ENCODE measurements at regions of chr5 and their contacts with region 1.

Region 1: GRCh38 chr5:127030259-127031146 is at the start of gene MARCHF3:
- DNase-seq: peak; percentile 94
- H3K4me3 Mint-ChIP-seq: peak within 1 kb of the TSS; percentile 86
- H3K27ac Mint-ChIP-seq: peak within 1 kb of the TSS; percentile 38
- H3K4me1 Mint-ChIP-seq: peaks cover 15% of the 10 kb centered on the region
- H3K27me3 Mint-ChIP-seq: peaks cover 42% of the 10 kb centered on the region
- total RNA-seq, gene MARCHF3: 1.9 and 2.1 TPM in 2 replicates

Region 2: GRCh38 chr5:126676195-126676624 is 354.3 kb before region 1 on chr5:
- intact Hi-C with region 1: loop called (anchors 5 kb)
- DNase-seq: peak; percentile 57
- H3K4me3 Mint-ChIP-seq: no peak overlapping the region
- H3K27ac Mint-ChIP-seq: peak overlapping the region; percentile 8
- H3K4me1 Mint-ChIP-seq: peaks cover 19% of the 10 kb centered on the region
- H3K27me3 Mint-ChIP-seq: no peaks in the 10 kb centered on the region

Region 3: GRCh38 chr5:126852091-126852571 is 178.4 kb before region 1 on chr5:
- intact Hi-C with region 1: loop called (anchors 5 kb)
- DNase-seq: no peak
- H3K4me3 Mint-ChIP-seq: peak overlapping the region; percentile 43
- H3K27ac Mint-ChIP-seq: peak overlapping the region; percentile 68
- H3K4me1 Mint-ChIP-seq: peaks cover 40% of the 10 kb centered on the region
- H3K27me3 Mint-ChIP-seq: no peaks in the 10 kb centered on the region

Region 4: GRCh38 chr5:126875303-126875785 is 155.2 kb before region 1 on chr5:
- intact Hi-C with region 1: no loop called
- DNase-seq: no peak
- H3K4me3 Mint-ChIP-seq: no peak overlapping the region
- H3K27ac Mint-ChIP-seq: no peak overlapping the region
- H3K4me1 Mint-ChIP-seq: no peaks in the 10 kb centered on the region
- H3K27me3 Mint-ChIP-seq: no peaks in the 10 kb centered on the region

Region 5: GRCh38 chr5:126988021-126988569 is 42.4 kb before region 1 on chr5:
- intact Hi-C with region 1: loop called (anchors 1 kb)
- DNase-seq: peak; percentile 15
- H3K4me3 Mint-ChIP-seq: no peak overlapping the region
- H3K27ac Mint-ChIP-seq: peak overlapping the region; percentile 50
- H3K4me1 Mint-ChIP-seq: peaks cover 13% of the 10 kb centered on the region
- H3K27me3 Mint-ChIP-seq: no peaks in the 10 kb centered on the region

Region 6: GRCh38 chr5:127072861-127073846 is 42.7 kb after region 1 on chr5 and contains the start of gene C5orf63:
- intact Hi-C with region 1: loop called (anchors 1 kb)
- DNase-seq: peak; percentile 68
- H3K4me3 Mint-ChIP-seq: peak within 1 kb of the TSS; percentile 94
- H3K27ac Mint-ChIP-seq: peak within 1 kb of the TSS; percentile 91
- H3K4me1 Mint-ChIP-seq: peaks cover 22% of the 10 kb centered on the region
- H3K27me3 Mint-ChIP-seq: no peaks in the 10 kb centered on the region
- total RNA-seq, gene C5orf63: 6.1 and 6.4 TPM in 2 replicates

Region 7: GRCh38 chr5:127229185-127229889 is 198.8 kb after region 1 on chr5:
- intact Hi-C with region 1: loop called (anchors 1 kb)
- DNase-seq: peak; percentile 41
- H3K4me3 Mint-ChIP-seq: peak overlapping the region; percentile 45
- H3K27ac Mint-ChIP-seq: no peak overlapping the region
- H3K4me1 Mint-ChIP-seq: peaks cover 8% of the 10 kb centered on the region
- H3K27me3 Mint-ChIP-seq: peaks cover 11% of the 10 kb centered on the region

Region 8: DNA sequence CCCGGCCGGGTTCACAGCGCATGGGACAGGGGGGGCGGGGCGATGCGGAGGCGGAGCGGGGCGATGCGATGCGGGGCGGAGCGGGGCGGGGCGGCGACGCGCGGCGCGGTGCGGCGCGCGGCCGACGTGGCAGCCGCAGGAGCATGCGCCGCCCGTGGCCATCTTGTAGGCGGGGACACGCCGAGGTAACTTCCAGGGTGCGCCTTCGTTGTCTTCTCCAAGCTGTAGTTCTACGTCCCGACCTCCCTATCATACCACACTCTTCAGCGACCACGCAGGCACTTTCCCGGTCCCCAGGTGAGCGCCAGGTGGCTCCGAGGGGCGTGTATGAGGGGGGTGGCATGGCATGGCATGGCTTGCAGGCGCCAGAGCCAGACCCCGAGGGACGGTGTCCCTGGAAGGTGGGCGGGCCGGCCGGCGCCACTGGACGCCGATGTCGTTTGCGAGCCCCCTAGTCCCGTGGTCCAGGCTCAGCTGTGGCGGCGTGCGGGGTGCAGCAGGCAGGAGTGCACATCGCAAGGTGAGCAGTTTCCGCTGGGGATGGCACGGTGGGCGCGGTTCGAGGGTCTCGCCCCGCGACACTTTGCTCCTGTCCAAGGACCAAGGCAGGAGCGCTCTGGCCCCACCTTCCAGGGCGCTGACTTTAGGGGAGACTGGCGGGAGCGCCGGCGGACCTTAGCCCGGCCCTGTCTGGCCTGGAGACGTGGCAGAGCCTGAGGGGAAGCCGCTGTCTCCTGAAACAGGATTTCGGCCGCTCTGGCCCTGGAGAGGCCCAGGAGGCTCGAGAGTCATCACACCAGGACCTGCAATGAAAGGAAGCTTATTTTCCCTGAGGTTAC is 487.2 kb after region 1 on chr5 and contains the start of gene PRRC1:
- intact Hi-C with region 1: loop called (anchors 5 kb)
- DNase-seq: peak; percentile 73
- H3K4me3 Mint-ChIP-seq: peak within 1 kb of the TSS; percentile 85
- H3K27ac Mint-ChIP-seq: peak within 1 kb of the TSS; percentile 75
- H3K4me1 Mint-ChIP-seq: peaks cover 23% of the 10 kb centered on the region
- H3K27me3 Mint-ChIP-seq: peaks cover 11% of the 10 kb centered on the region
- total RNA-seq, gene PRRC1: 53.5 and 56.9 TPM in 2 replicates

Measured in activated T-helper 2 cell treated with anti-CD3 and anti-CD28 coated beads, Interferon-gamma antibody, Interleukin-2, Interleukin-4, amounts not matched to agents 10 μg/mL and 5 μg/mL and 100 μg/mL, durations not matched to agents 14 hours and 24 hours and 36 hours (primary cell).